Mammary epithelial cell (primary cell): ENCODE measurements at regions of chr2 and their contacts with region 1.

Region 1: GRCh38 chr2:82993637-82994036 is 1465.4 kb downstream of the SUCLG1 start:
- DNase-seq: peak; percentile 98
- H3K4me3 ChIP-seq: peak overlapping the region in 1 of 3 experiments; percentile 32
- H3K27ac ChIP-seq: peak overlapping the region; percentile 99
- H3K4me1 ChIP-seq: peaks cover 22% of the 10 kb centered on the region
- H3K27me3 ChIP-seq: no peaks in the 10 kb centered on the region
- CTCF ChIP-seq: no peak

Region 2: DNA sequence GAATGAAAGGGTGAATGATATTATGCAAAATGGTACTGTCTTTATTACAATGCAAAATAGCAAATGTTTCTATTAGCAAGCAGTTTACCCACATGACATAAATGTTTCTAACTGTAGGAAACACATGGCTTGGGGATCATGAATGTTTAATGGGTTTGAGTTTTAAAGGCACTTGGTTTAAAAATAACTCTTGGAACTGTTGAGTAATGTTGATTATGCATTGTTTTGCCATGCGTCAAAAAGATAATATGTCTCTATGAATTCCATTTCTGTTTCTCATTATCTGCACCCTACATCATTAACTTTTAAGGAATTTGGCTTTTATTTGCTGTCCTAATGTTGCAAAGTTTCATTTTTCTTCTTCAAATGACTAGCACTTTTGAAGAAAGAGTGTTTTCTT is 110.0 kb after region 1 on chr2:
- CTCF ChIA-PET with region 1: no interaction called
- dilution Hi-C with region 1: no loop called
- in situ Hi-C with region 1: no loop called
- intact Hi-C with region 1: loop called (anchors 10 kb)
- DNase-seq: peak; percentile 48
- H3K4me3 ChIP-seq: no peak overlapping the region
- H3K27ac ChIP-seq: no peak overlapping the region
- H3K4me1 ChIP-seq: peaks cover 12% of the 10 kb centered on the region
- H3K27me3 ChIP-seq: no peaks in the 10 kb centered on the region
- CTCF ChIP-seq: no peak